ENCODE measurements at regions of chr4 and their contacts with region 1.

Region 1: GRCh38 chr4:183074296-183074990 is 24.6 kb upstream of the WWC2 start:
- DNase-seq: no peak
- H3K4me3 ChIP-seq: no peak overlapping the region
- H3K27ac ChIP-seq: peak overlapping the region in 1 of 2 donors; percentile 8
- H3K4me1 ChIP-seq: peaks cover 14% of the 10 kb centered on the region
- H3K27me3 ChIP-seq: no peaks in the 10 kb centered on the region
- CTCF ChIP-seq: no peak
- POLR2A ChIP-seq: no peak

Region 2: DNA sequence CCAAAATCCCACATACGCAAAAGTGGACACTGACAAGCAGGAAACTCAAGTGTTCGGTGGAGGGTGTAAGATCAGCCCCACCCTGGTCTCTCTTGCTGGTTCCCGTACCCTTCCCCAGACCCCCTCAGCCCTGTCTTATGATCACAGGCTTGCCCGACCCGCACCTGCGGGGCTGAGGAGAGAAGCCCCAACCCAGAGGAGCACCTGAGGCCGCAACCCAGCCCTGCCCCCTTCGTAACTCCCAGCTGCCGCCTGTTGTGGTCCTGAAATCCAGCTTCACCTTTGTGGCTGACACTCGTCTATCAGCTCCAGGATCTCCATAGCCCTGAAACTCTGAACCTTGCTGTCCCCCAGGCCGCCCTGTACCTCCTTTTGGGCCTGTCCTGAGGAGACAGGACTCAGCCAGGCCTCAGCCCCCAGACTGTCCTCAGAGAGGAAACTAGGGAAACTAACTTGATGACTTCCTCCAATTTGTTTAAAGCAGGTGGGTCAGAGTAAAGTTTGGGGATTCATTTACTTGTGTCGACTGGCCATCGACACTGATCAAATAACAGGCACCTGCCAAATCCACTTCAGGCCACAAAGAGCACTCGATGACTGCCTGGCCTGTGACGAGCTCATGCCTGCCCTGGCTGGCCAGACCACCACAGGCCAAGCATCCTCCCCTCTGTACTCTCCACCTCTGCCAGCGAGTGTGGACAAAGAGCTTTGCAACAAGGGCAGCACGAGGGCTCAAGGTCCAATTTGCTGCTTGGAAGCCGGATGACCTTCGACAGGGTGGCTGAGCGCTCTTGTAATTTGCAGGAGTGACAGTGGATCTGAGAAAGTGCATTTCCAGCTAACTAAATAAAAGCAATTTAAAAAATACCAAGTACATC is 176.6 kb before region 1 on chr4:
- intact Hi-C with region 1: no loop called
- DNase-seq: no peak
- H3K4me3 ChIP-seq: no peak overlapping the region
- H3K27ac ChIP-seq: no peak overlapping the region
- H3K4me1 ChIP-seq: no peaks in the 10 kb centered on the region
- H3K27me3 ChIP-seq: no peaks in the 10 kb centered on the region
- CTCF ChIP-seq: no peak
- POLR2A ChIP-seq: no peak

Region 3: DNA sequence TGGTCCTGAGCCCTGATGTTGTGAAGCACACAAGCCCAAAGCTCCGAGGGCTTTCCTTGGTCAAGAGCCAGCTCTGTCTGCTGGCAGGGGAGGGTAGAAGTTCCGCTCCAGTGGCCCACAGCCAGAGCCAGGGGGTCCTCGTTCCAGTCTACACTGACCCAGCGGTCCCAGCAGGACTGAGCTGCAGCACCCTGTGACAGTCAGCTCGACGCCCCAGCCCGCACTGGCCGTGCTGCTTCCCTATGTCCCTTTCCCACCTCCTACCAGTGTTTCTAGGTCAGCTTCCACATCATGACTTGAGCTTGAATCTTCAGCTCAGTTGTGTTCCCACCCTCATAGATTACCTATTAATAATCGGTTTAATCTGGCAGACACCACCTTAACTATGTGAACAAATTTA is 134.8 kb before region 1 on chr4:
- intact Hi-C with region 1: loop called (anchors 10 kb)
- DNase-seq: no peak
- H3K4me3 ChIP-seq: no peak overlapping the region
- H3K27ac ChIP-seq: no peak overlapping the region
- H3K4me1 ChIP-seq: no peaks in the 10 kb centered on the region
- H3K27me3 ChIP-seq: no peaks in the 10 kb centered on the region
- CTCF ChIP-seq: no peak
- POLR2A ChIP-seq: no peak

Region 4: DNA sequence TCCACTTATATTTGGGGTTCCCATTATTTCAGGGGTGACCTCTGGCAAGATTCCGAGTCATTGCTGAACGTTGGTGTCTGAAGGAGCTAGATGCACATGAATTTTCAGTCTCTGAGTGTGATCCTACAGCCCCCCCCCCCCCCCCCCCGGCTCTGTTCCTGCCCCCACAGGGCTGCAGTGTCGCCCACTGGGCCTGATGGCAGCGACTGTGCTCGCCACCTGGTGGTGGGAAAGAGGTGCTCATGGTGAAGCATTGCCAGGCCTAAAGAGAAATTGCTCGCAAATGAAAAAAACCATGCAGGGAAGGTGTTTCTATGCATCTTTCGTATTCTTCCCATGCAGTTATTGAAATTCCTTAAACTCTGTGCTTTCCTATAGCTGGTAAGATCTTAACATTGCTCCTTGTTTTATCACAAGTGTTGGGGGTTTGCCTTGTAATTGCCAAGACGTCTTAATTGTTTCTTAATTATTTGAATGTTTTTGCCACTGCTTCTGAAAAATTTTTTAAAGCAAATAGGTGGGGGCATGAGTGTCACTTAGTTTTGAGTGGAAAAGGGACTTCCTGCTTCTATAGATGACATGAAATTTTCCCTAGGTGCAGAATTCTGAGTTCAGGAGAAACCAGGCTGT is 182.4 kb after region 1 on chr4:
- intact Hi-C with region 1: loop called (anchors 5 kb)
- DNase-seq: peak; percentile 71
- H3K4me3 ChIP-seq: no peak overlapping the region
- H3K27ac ChIP-seq: no peak overlapping the region
- H3K4me1 ChIP-seq: no peaks in the 10 kb centered on the region
- H3K27me3 ChIP-seq: no peaks in the 10 kb centered on the region
- CTCF ChIP-seq: peak; percentile 59 to 79 (median 64)
- POLR2A ChIP-seq: no peak